Heart left ventricle (tissue), 16 donors: ENCODE measurements at regions of chr13 and their contacts with region 1.

Region 1: GRCh38 chr13:89951341-89951740 is 1396.1 kb upstream of the MIR17HG start:
- DNase-seq: peak in 2 of 5 donors; percentile 23 to 26
- ATAC-seq: peak in 3 of 4 donors; percentile 52 to 62 (median 54)
- H3K4me3 ChIP-seq: no peak overlapping the region
- H3K27ac ChIP-seq: no peak overlapping the region
- H3K4me1 ChIP-seq: no peaks in the 10 kb centered on the region
- H3K27me3 ChIP-seq: no peaks in the 10 kb centered on the region
- CTCF ChIP-seq: peak in 2 of 12 donors; percentile 13 to 24
- POLR2A ChIP-seq: no peak

Region 2: GRCh38 chr13:89930861-89931260 is 20.5 kb before region 1 on chr13:
- intact Hi-C with region 1: no loop called
- DNase-seq: no peak
- ATAC-seq: no peak
- H3K4me3 ChIP-seq: no peak overlapping the region
- H3K27ac ChIP-seq: no peak overlapping the region
- H3K4me1 ChIP-seq: no peaks in the 10 kb centered on the region
- H3K27me3 ChIP-seq: no peaks in the 10 kb centered on the region
- CTCF ChIP-seq: no peak
- POLR2A ChIP-seq: no peak

Region 3: DNA sequence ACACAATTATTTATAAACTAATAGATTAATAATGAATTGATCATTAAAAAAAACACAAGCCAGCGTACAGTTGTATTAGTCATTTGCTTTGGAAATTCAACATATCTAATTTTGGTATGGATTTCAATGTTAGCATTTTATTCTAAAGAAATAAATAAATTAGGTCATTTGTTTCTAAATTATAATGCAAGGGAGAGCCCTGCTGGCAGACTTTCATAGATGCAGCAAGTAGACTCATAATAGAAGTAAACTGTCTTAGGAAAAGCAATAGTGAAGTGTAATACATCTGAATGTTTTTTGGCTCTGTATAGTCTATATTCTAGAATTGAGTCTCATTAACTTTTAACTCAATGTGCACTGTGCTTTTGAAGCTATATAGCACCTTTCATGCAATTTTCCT is 413.8 kb after region 1 on chr13:
- intact Hi-C with region 1: loop called in 2 of 10 experiments (anchors 10 kb)
- DNase-seq: no peak
- ATAC-seq: no peak
- H3K4me3 ChIP-seq: no peak overlapping the region
- H3K27ac ChIP-seq: no peak overlapping the region
- H3K4me1 ChIP-seq: no peaks in the 10 kb centered on the region
- H3K27me3 ChIP-seq: no peaks in the 10 kb centered on the region
- CTCF ChIP-seq: peak in 7 of 12 donors; percentile 29 to 43 (median 36)
- POLR2A ChIP-seq: no peak

Region 4: GRCh38 chr13:90867336-90867683 is 916.0 kb after region 1 on chr13:
- intact Hi-C with region 1: loop called in 2 of 10 experiments (anchors 5 to 10 kb)
- DNase-seq: peak; percentile 36 to 62 (median 42)
- ATAC-seq: peak; percentile 58 to 84 (median 80)
- H3K4me3 ChIP-seq: no peak overlapping the region
- H3K27ac ChIP-seq: no peak overlapping the region
- H3K4me1 ChIP-seq: no peaks in the 10 kb centered on the region
- H3K27me3 ChIP-seq: no peaks in the 10 kb centered on the region
- CTCF ChIP-seq: peak; percentile 28 to 66 (median 55)
- POLR2A ChIP-seq: no peak